Colonic mucosa (tissue), 4 donors: ENCODE measurements at regions of chr7 and their contacts with region 1.

Region 1: GRCh38 chr7:90708841-90709317 is 112.8 kb downstream of the CDK14 start:
- DNase-seq: peak; percentile 63
- H3K4me3 ChIP-seq: no peak overlapping the region
- H3K27ac ChIP-seq: no peak overlapping the region
- H3K4me1 ChIP-seq: no peaks in the 10 kb centered on the region
- H3K27me3 ChIP-seq: no peaks in the 10 kb centered on the region
- CTCF ChIP-seq: peak; percentile 63

Region 2: GRCh38 chr7:91034459-91035368 is 325.8 kb after region 1 on chr7:
- intact Hi-C with region 1: loop called (anchors 5 kb)
- DNase-seq: peak; percentile 62
- H3K4me3 ChIP-seq: no peak overlapping the region
- H3K27ac ChIP-seq: no peak overlapping the region
- H3K4me1 ChIP-seq: no peaks in the 10 kb centered on the region
- H3K27me3 ChIP-seq: no peaks in the 10 kb centered on the region
- CTCF ChIP-seq: peak; percentile 46